Activated T-helper 2 cell treated with anti-CD3 and anti-CD28 coated beads, Interferon-gamma antibody, Interleukin-2, Interleukin-4, amounts not matched to agents 10 μg/mL and 5 μg/mL and 100 μg/mL, durations not matched to agents 14 hours and 24 hours and 36 hours (primary cell): ENCODE measurements at regions of chr15 and their contacts with region 1.

Region 1: DNA sequence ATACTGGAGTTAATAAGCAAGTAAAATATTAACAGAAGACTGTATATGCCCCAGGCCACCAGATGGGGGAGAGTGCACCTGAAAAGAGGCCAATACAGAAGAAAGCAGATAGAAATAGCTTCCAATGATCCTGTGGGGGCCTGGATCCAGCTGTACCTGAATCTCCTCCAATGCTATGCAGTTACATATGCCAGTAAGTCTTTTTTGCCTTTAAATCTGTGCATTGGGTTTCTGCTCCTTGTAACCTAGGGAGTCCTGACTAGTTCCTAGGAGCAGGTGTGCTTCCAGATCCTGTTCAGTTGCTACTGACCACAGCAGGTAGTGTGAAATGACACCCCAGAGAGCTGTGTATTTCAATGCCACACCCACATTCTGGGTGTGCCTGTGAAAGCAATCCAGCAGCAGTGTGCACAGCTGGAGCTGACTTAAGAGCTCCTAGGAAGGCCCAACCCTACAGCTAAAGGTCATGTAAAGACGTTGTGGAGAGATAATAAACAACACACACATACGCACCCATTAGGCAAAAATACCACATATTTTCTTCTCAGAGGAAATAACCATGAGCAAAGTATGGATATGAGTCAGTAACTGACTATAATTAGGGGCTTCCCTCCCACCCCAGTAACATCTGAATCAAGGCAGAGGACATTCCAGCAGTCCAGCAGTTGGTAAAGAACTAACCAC is 62.2 kb upstream of the AKAP13 start:
- DNase-seq: peak; percentile 55
- H3K4me3 Mint-ChIP-seq: peak overlapping the region; percentile 41
- H3K27ac Mint-ChIP-seq: peak overlapping the region; percentile 91
- H3K4me1 Mint-ChIP-seq: peaks cover 66% of the 10 kb centered on the region
- H3K27me3 Mint-ChIP-seq: no peaks in the 10 kb centered on the region

Region 2: DNA sequence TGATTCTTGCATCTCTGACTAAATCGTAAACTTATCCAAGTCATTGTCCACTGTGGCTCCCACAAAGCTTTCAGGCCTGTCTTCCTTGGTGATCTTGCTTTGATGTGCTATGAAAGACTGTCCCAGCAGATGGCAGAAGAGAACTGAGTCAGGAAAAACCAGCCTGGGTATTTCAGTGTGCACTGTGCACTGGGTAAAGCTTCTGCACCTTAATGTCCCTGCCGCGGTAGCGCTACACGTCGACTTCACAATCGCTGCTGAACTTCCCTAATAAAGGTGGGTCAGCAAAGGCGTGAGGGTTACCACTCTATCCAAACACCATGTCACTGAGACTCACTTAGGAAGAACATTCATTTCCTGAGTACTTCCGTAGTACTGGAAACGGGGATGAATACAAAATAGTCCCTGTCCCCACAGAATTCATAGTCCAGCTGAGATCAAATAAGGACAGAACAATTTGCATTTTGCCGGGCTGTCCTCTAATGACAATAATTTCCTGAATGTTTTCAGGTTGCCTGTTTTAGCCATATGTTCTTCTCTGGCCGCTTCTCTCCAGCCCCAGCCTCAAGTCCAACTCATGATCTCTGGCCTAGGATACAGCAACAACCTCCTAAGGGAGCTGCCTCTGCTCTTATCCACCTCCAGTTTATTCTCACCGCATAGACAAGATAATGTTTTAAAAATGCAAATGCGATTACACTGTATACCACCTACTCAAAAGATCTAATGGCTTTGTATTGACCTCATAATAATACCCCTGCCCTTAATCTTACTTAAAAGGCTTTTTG is 21.4 kb before region 1 on chr15:
- intact Hi-C with region 1: loop called (anchors 2 kb)
- DNase-seq: peak; percentile 65
- H3K4me3 Mint-ChIP-seq: peak overlapping the region; percentile 28
- H3K27ac Mint-ChIP-seq: peak overlapping the region; percentile 8
- H3K4me1 Mint-ChIP-seq: peaks cover 19% of the 10 kb centered on the region
- H3K27me3 Mint-ChIP-seq: peaks cover 7% of the 10 kb centered on the region

Region 3: DNA sequence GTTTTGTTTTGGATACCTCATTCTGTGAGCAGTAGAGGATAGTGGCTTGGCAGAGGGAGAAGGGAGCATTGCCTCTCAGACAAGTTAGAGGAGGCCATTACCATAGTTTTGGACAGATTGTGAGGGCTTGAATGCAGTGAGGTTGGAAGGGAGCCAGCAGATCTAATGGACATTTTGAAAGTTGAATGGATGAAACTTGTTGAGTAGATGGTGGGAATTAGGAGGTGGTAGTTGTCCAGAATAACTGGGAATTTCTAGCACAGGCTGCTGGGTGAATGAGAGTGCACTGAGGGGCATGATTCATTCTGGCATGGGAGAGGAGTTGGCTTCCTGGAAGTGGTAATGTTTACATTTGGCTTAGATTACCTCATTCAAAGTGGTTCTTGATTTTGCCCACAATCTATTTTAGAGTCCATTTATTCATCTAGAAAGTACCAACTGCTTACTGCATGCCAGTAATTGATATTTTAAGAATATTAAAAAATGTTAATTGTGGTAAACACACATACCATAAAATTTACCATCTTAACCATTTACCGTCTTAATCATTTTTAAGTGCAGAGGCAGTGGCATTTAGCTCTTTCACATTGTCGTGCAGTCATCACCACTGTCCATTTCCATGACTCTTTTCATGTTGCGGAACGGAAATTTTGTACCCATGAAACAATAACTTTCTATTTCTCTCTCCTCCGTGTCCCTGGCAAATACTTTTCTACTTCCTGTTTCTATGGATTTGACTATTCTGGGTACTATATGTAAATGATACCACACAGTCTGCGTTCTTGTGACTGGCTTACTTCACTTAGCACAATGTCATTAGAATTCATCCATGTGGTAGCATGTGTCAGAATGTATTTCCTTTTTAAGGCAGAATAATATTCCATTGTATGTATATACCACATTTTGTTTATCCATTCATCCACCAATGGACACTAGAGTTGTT is 89.9 kb after region 1 on chr15:
- intact Hi-C with region 1: loop called (anchors 1 kb)
- DNase-seq: no peak
- H3K4me3 Mint-ChIP-seq: peak overlapping the region; percentile 54
- H3K27ac Mint-ChIP-seq: peak overlapping the region; percentile 89
- H3K4me1 Mint-ChIP-seq: peaks cover 69% of the 10 kb centered on the region
- H3K27me3 Mint-ChIP-seq: no peaks in the 10 kb centered on the region

Region 4: DNA sequence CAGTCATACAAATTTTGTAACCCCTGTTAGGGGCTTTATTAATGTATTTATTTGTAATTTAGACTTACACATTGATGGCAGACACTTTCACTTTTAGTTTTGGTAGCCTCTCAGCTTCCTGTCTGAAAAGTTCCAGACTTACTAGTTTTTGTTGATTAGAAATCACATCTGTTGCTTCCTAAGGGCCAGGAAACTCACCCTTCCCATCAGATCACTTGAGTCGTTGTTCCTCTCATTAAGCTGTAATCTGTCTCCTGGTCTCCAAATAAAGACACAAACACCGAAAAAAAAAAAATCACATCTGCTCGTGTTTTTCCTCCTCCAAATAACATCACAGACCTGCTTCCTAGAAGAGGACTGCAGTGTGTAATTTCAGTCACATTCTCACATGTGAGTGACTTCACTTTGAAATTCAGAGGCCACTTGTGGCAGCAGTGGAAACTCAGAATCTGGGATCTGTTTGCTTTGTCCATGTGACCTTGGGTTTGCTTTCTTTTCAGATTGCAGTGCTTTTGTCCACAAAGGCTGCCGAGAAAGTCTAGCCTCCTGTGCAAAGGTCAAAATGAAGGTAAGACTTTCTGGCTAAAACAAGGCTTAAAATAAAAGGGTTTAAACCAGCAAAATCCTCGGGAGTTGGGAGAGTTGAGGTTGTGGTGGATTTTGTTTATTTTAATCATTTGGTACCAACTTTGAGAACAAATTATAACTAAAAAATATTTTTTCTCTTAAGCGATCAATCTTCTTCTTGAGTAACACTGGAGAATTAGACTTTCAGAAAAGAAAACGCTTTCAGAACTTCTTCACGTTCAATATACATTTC is 389.5 kb after region 1 on chr15:
- intact Hi-C with region 1: loop called (anchors 5 kb)
- DNase-seq: no peak
- H3K4me3 Mint-ChIP-seq: peak overlapping the region; percentile 80
- H3K27ac Mint-ChIP-seq: peak overlapping the region; percentile 98
- H3K4me1 Mint-ChIP-seq: peaks cover 74% of the 10 kb centered on the region
- H3K27me3 Mint-ChIP-seq: no peaks in the 10 kb centered on the region

Region 5: DNA sequence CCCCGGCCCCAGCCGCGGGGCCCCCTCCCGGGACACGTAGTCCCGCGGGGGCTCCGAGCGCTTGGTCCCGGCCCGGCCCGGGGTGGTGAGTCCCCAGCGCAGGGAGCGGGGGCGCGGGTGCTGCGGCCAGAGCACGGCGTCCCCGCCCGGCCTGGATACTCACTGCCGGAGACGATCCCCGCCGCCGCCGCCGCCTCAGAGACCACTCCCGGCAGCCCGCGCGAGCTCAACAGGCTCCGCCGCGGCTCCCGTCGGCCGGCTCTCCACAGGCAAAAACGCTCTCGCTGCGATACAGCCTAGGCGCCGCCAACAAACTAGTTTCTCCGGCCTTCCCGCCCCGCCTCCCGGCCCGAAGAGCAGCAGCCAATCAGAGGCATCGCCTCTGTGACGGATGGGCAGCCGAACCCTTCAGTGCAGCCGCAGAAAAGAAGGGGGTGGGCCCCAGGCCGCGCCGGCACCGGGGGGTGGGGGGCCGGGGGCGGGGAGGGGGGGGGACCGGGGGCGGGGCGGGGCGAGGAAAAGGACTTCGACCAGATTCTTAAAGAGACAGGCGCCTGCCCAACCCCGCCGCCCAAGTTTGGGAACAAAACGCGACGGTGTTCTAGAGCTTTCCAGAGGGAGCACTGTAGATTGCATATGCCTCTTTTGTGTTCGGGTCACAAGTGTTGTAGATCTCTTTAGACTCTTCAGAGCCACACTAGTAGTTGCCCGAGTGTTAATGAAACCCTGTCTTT is 476.6 kb after region 1 on chr15 and contains the start of gene KLHL25:
- intact Hi-C with region 1: no loop called
- DNase-seq: peak; percentile 92
- H3K4me3 Mint-ChIP-seq: peak within 1 kb of the TSS; percentile 89
- H3K27ac Mint-ChIP-seq: peak within 1 kb of the TSS; percentile 82
- H3K4me1 Mint-ChIP-seq: peaks cover 23% of the 10 kb centered on the region
- H3K27me3 Mint-ChIP-seq: no peaks in the 10 kb centered on the region
- total RNA-seq, gene KLHL25: 8.5 and 9.0 TPM in 2 replicates